ENCODE measurements at regions of chr3 and their contacts with region 1.

Region 1: DNA sequence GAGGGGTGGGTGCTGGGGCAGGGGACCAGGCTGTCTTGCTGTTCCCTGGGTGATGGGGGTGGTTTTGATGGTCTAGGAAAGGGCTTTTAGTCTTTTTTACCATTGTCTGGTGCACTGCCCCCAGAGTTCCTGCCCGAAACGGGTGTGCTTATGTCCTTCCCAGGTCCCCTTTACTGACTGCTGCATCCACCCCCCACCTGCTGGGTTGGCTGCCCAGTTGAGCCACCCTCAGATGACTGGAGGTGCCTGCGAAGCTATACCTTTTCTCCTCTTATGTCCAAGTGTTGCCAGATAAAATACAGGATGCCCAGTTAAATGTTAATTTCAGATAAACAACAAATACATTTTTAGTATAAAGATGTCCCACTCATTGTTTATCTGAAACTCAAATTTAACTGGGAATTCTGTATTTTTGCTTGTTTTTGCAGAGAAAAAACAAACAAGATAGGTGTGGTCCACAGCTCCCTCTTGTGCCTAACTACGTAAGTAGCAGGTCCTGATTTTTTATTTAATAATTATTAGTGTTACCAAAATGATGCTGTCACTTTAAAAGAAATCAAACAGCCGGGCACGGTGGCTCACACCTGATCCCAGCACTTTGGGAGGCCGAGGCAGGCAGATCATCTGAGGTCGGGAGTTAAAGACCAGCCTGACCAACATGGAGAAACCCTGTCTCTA is 6.1 kb upstream of the RPP14 start:
- DNase-seq: peak in 1 of 2 donors; percentile 36
- ATAC-seq: peak in 1 of 3 donors; percentile 18
- H3K4me3 ChIP-seq: no peak overlapping the region
- H3K4me3 Mint-ChIP-seq: no peak overlapping the region
- H3K27ac ChIP-seq: no peak overlapping the region
- H3K27ac Mint-ChIP-seq: no peak overlapping the region
- H3K4me1 ChIP-seq: no peaks in the 10 kb centered on the region
- H3K4me1 Mint-ChIP-seq: no peaks in the 10 kb centered on the region
- H3K27me3 ChIP-seq: no peaks in the 10 kb centered on the region
- H3K27me3 Mint-ChIP-seq: peaks cover 18 to 19% of the 10 kb centered on the region in 2 donors
- CTCF ChIP-seq: peak; percentile 29

Region 2: DNA sequence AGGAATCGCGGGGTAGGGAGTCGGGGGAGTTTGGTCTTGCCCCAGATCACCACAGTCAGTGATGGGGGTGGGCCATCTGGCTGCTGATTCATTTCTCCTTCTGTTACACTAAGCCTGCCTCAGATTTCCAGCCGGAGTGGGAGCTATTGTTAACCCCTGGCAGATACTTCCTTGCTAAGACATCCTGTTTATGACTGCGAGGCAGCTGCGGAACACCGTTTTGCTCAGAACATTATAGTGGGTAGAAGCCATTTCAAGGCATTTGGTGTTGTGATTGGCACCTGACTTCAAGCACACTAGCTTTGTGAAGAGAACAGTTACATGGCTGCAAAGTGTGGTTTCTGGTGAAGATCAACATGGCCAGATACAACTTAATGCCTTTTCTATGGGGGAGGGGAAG is 217.9 kb before region 1 on chr3:
- intact Hi-C with region 1: no loop called
- DNase-seq: peak in 1 of 2 donors; percentile 57
- ATAC-seq: no peak
- H3K4me3 ChIP-seq: no peak overlapping the region
- H3K4me3 Mint-ChIP-seq: no peak overlapping the region
- H3K27ac ChIP-seq: no peak overlapping the region
- H3K27ac Mint-ChIP-seq: peak overlapping the region in 1 of 2 donors; percentile 51
- H3K4me1 ChIP-seq: peaks cover 12% of the 10 kb centered on the region
- H3K4me1 Mint-ChIP-seq: peaks cover 18 to 19% of the 10 kb centered on the region in 2 donors
- H3K27me3 ChIP-seq: no peaks in the 10 kb centered on the region
- H3K27me3 Mint-ChIP-seq: no peaks in the 10 kb centered on the region
- CTCF ChIP-seq: no peak

Region 3: DNA sequence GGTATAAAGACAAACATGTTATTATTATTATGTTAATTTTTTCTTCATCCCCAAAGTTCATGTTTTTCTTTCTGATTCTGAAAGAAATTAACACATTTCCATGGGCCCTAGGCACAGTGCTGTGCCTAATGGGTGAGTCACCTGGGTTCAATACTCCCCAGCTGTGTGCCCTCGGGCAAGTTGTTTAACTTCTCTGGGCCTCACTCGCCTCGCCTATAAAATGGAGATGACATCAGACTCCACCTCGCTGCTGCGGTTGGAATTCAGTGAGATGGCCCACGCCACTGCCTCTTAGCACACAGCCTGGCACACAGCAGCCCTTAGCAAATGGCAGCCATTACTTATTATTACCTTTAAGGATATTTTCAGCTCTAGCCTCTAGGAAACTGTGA is 111.8 kb before region 1 on chr3:
- intact Hi-C with region 1: loop called (anchors 2 kb)
- DNase-seq: no peak
- ATAC-seq: no peak
- H3K4me3 ChIP-seq: no peak overlapping the region
- H3K4me3 Mint-ChIP-seq: no peak overlapping the region
- H3K27ac ChIP-seq: no peak overlapping the region
- H3K27ac Mint-ChIP-seq: no peak overlapping the region
- H3K4me1 ChIP-seq: peaks cover 5% of the 10 kb centered on the region
- H3K4me1 Mint-ChIP-seq: no peaks in the 10 kb centered on the region
- H3K27me3 ChIP-seq: no peaks in the 10 kb centered on the region
- H3K27me3 Mint-ChIP-seq: no peaks in the 10 kb centered on the region
- CTCF ChIP-seq: no peak

Region 4: DNA sequence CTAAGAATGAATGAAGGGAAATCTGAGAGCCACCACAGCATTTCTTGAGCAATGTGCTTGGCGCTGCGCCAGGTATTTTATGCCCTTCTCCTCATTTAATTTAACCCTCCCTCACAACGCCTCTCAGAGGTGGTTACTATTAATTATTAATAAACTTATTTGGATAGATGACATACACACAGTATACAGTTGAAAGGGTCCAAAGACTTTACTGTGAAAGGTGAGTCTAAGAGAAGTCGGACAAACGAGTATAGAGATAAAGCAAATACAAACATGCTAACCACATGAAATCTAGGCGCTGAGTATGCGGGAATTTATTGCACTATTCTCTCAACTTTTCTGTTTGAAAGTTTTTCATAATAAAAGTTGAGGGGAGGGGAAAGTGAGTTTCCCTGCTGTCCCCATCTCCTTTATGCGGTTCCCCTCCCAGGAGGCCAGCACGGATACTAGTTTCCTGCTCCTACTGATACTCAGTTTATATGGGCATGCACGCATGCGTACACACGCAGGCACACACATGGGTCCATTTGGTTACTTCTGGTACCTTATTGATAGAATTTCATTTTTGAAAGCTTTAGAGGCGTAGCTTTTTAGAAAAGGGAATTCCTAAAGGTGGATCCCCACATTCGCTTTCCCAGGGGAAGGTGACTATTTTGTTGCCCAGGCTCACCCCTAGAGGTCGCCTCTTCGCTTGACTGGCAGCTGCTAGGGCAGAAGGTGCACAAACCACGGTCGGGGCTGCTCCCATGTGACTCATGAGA is 163.4 kb after region 1 on chr3:
- intact Hi-C with region 1: no loop called
- DNase-seq: peak; percentile 63 to 79
- ATAC-seq: peak; percentile 93 to 99 (median 98)
- H3K4me3 ChIP-seq: no peak overlapping the region
- H3K4me3 Mint-ChIP-seq: peak overlapping the region; percentile 35
- H3K27ac ChIP-seq: no peak overlapping the region
- H3K27ac Mint-ChIP-seq: peak overlapping the region in 1 of 2 donors; percentile 36
- H3K4me1 ChIP-seq: peaks cover 12% of the 10 kb centered on the region
- H3K4me1 Mint-ChIP-seq: peaks cover 8 to 12% of the 10 kb centered on the region in 2 donors
- H3K27me3 ChIP-seq: no peaks in the 10 kb centered on the region
- H3K27me3 Mint-ChIP-seq: no peaks in the 10 kb centered on the region
- CTCF ChIP-seq: peak; percentile 94